Mucosa of descending colon (tissue), 3 donors: ENCODE measurements at regions of chr12 and their contacts with region 1.

Region 1: DNA sequence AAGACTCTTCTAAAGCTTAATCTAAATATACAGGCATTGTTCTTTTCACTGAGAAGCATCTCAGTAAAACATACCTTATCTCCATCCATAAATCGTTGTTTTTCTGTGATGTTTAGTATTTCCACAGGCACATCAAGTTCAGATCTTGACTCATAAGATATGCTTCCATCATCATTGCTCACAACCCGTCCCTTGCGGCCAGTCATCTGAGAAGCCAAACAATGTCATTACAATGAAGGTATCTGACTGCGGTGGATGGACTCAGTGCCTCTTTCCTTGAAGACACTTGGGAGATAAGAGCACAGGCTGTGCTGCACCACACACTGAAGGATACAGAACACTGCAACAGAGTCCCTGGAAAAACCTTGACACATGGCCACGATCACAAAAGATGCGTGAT is 44.8 kb downstream of the SBNO1 start:
- DNase-seq: no peak
- ATAC-seq: no peak
- H3K4me3 ChIP-seq: no peak overlapping the region
- H3K4me1 ChIP-seq: no peaks in the 10 kb centered on the region
- CTCF ChIP-seq: no peak

Region 2: GRCh38 chr12:123278101-123278627 is 41.7 kb before region 1 on chr12:
- intact Hi-C with region 1: no loop called
- DNase-seq: no peak
- ATAC-seq: peak; percentile 7
- H3K4me3 ChIP-seq: no peak overlapping the region
- H3K4me1 ChIP-seq: no peaks in the 10 kb centered on the region
- CTCF ChIP-seq: no peak

Region 3: GRCh38 chr12:123335490-123335889 is 15.7 kb after region 1 on chr12:
- intact Hi-C with region 1: loop called in 1 of 2 experiments (anchors 2 kb)
- DNase-seq: no peak
- ATAC-seq: no peak
- H3K4me3 ChIP-seq: no peak overlapping the region
- H3K4me1 ChIP-seq: no peaks in the 10 kb centered on the region
- CTCF ChIP-seq: no peak